Activated B cell treated with CpG ODN at 0.5 μM for 24 hours (primary cell): ENCODE measurements at regions of chr19 and their contacts with region 1.

Region 1: GRCh38 chr19:47436712-47437401 is 17.5 kb upstream of the MEIS3 start:
- DNase-seq: peak; percentile 71
- ATAC-seq: peak; percentile 93
- H3K4me3 Mint-ChIP-seq: no peak overlapping the region
- H3K27ac Mint-ChIP-seq: no peak overlapping the region
- H3K4me1 Mint-ChIP-seq: peaks cover 7% of the 10 kb centered on the region
- H3K27me3 Mint-ChIP-seq: peaks cover 68% of the 10 kb centered on the region
- CTCF ChIP-seq: no peak

Region 2: GRCh38 chr19:47697863-47698609 is 261.2 kb after region 1 on chr19:
- CTCF ChIA-PET with region 1: interaction called, 47 read pairs
- POLR2A ChIA-PET with region 1: interaction called, 3 read pairs
- intact Hi-C with region 1: loop called (anchors 1 kb)
- DNase-seq: peak; percentile 37
- ATAC-seq: peak; percentile 71
- H3K4me3 Mint-ChIP-seq: no peak overlapping the region
- H3K27ac Mint-ChIP-seq: no peak overlapping the region
- H3K4me1 Mint-ChIP-seq: no peaks in the 10 kb centered on the region
- H3K27me3 Mint-ChIP-seq: no peaks in the 10 kb centered on the region
- CTCF ChIP-seq: no peak

Region 3: DNA sequence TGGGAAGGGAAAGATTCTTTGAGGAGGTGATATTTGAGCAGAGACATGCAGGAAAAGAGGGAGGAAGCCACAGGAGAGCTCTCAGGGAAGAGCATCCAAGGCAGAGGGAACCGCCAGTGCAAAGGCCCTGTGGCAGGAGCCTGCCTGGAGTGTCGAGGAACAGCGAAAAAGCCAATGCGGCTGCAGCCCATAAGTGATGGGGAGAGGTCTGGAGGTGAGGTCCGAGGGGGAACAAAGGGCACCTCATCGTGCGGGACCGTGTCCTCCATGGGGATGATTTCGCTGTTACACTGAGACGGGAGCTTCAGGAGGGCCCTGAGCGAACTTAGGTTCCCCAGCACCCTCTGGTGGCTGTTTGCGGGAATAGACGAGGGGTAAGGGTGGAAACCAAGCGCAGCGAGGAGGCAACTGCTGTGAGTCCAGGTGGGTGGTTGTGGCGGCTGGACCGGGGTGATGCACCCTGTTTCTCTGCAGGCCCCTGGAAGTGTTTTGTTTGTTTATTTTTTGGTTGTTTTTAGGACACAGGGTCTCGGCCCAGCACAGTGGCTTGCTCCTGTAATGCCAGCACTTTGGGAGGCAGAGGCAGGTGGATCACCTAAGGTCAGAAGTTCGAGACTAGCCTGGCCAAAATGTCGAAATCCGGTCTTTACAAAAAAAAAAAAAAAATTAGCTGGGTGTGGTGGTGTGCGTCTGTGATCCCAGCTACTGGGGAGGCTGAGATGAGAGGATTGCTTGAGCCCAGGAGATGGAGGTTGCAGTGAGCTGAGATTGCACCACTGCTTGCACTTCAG is 270.5 kb after region 1 on chr19:
- CTCF ChIA-PET with region 1: interaction called, 72 read pairs
- POLR2A ChIA-PET with region 1: interaction called, 4 read pairs
- intact Hi-C with region 1: loop called (anchors 1 kb)
- DNase-seq: peak; percentile 56
- ATAC-seq: peak; percentile 77
- H3K4me3 Mint-ChIP-seq: no peak overlapping the region
- H3K27ac Mint-ChIP-seq: no peak overlapping the region
- H3K4me1 Mint-ChIP-seq: no peaks in the 10 kb centered on the region
- H3K27me3 Mint-ChIP-seq: peaks cover 16% of the 10 kb centered on the region
- CTCF ChIP-seq: no peak

Region 4: DNA sequence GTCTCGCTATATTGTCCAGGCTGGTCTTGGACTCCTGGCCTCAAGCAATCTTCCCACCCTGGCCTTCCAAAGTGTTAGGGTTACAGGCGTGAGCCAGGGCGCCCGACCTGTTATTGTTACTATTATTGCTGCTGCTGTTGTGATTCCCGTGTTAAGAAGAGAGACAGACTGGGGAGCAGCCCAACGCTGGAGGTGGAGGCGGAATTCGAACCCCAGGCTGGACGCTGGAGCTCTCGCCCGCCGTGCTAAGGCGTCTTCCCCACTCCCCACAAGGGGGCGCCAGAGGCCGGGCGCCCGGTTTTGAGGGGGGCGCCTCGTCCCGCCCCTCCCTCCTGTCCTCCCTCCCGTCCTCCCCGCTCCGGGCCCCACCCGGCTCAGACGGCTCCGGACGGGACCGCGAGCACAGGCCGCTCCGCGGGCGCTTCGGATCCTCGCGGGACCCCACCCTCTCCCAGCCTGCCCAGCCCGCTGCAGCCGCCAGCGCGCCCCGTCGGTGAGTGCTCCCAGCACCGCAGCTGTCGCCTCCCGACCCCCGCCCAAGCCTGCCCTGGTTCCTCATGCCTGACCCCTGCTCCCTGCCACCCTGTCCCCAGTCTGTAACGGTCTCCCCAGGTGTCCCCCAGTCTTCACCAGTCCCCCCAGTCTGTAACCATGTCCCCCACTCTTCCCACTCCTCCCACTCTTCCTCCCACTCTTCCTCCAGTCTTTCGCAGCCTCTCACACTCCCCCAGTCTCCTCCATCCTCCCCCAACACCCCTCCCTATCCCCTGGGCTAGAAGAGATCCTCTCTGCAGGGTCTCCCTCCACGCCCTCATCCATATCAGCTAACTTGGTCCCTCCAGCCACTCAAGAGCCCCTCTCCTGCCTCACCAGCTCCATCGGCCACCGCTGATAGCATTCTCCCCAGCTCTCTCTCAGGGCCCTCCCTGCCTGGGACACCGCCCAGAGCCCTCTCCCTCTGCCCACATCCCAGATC is 276.5 kb after region 1 on chr19 and contains the start of gene EHD2:
- CTCF ChIA-PET with region 1: interaction called, 72 read pairs
- POLR2A ChIA-PET with region 1: no interaction called
- intact Hi-C with region 1: no loop called
- DNase-seq: no peak
- ATAC-seq: no peak
- H3K4me3 Mint-ChIP-seq: no peak within 1 kb of the TSS
- H3K27ac Mint-ChIP-seq: no peak within 1 kb of the TSS
- H3K4me1 Mint-ChIP-seq: peaks cover 3% of the 10 kb centered on the region
- H3K27me3 Mint-ChIP-seq: peaks cover 32% of the 10 kb centered on the region
- CTCF ChIP-seq: no peak
- total RNA-seq, gene EHD2: not detected in 2 replicates

Region 5: GRCh38 chr19:47790398-47790814 is 353.5 kb after region 1 on chr19:
- CTCF ChIA-PET with region 1: interaction called, 5 read pairs
- POLR2A ChIA-PET with region 1: no interaction called
- intact Hi-C with region 1: loop called (anchors 2 kb)
- DNase-seq: peak; percentile 74
- ATAC-seq: peak; percentile 58
- H3K4me3 Mint-ChIP-seq: no peak overlapping the region
- H3K27ac Mint-ChIP-seq: no peak overlapping the region
- H3K4me1 Mint-ChIP-seq: no peaks in the 10 kb centered on the region
- H3K27me3 Mint-ChIP-seq: peaks cover 2% of the 10 kb centered on the region
- CTCF ChIP-seq: peak; percentile 17